Common myeloid progenitor, CD34-positive (primary cell): ENCODE measurements at regions of chr3 and their contacts with region 1.

Region 1: GRCh38 chr3:52339612-52340011 is 23.5 kb downstream of the DNAH1 start:
- DNase-seq: peak; percentile 89 to 93 (median 89)
- H3K4me3 ChIP-seq: no peak overlapping the region
- H3K27ac ChIP-seq: no peak overlapping the region
- H3K4me1 ChIP-seq: no peaks in the 10 kb centered on the region
- H3K27me3 ChIP-seq: no peaks in the 10 kb centered on the region

Region 2: DNA sequence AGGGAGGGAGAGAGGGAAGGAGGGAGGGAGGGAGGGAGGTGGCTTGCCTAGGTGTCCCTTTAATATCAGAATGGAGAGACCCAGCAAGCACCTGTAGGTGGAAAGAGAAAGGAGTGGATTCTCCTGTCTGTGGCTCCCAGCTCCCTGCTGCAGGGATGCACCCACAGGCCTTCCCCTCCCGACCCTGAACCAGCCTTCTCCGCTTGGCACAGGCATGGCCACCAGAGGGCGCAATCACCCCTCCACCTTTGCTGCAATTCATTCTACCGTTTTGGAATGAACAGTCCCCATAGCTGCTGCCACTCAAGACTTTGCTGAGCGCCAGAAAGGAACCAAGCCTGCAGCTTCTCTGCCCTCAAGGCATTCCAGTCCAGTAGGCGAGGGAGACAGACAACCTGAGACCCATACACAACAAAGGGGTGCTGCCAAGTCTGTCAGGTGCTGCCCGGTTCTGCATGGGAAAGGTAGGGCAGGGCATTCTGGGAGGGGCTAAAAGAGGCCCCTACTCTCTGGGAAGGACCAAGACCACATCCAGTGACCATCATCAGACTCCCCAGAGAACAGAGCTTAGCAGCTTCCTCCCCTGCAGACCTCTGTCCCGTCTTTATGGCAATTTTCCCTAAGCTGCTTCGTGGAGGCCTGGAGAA is 119.1 kb before region 1 on chr3:
- CTCF ChIA-PET with region 1: interaction called, 122 read pairs
- POLR2A ChIA-PET with region 1: interaction called, 3 read pairs
- DNase-seq: peak; percentile 79 to 90 (median 84)
- H3K4me3 ChIP-seq: no peak overlapping the region
- H3K27ac ChIP-seq: no peak overlapping the region
- H3K4me1 ChIP-seq: peaks cover 10 to 80% (median 59%) of the 10 kb centered on the region in 4 experiments
- H3K27me3 ChIP-seq: no peaks in the 10 kb centered on the region

Region 3: DNA sequence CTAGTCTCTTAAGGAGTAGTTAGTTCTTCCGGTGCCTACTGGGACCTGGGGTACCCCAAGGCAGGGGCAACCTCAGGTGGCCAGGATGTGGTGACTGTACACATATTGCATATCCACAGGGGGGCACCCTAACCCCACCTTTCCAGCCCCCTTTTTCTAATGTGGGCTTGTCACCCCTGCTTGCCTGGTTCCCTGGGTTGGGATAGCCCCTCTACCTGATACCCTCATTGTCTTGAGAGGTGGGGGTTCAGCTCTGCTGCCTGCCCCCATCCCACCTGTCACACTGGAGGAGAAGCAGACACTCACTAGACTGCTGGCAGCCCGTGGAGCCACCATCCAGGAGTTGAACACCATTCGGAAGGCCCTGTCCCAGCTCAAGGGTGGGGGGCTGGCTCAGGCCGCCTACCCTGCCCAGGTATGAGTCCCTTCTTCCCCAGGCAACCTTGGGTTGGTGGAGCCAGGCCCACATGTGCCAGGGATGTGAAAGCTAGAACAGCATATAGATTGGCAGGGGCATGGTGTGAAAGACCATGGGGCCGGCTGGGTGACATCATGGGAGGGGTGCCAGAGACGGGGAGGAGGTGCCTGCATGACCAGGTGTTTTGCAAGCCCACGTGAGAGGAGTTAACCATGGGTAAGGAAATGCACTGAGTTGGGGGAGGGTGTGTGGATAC is 48.0 kb before region 1 on chr3:
- CTCF ChIA-PET with region 1: interaction called, 471 read pairs
- POLR2A ChIA-PET with region 1: interaction called, 3 read pairs
- DNase-seq: peak; percentile 39 to 65 (median 57)
- H3K4me3 ChIP-seq: no peak overlapping the region
- H3K27ac ChIP-seq: no peak overlapping the region
- H3K4me1 ChIP-seq: peaks cover 3 to 33% (median 19%) of the 10 kb centered on the region in 4 experiments
- H3K27me3 ChIP-seq: no peaks in the 10 kb centered on the region

Region 4: DNA sequence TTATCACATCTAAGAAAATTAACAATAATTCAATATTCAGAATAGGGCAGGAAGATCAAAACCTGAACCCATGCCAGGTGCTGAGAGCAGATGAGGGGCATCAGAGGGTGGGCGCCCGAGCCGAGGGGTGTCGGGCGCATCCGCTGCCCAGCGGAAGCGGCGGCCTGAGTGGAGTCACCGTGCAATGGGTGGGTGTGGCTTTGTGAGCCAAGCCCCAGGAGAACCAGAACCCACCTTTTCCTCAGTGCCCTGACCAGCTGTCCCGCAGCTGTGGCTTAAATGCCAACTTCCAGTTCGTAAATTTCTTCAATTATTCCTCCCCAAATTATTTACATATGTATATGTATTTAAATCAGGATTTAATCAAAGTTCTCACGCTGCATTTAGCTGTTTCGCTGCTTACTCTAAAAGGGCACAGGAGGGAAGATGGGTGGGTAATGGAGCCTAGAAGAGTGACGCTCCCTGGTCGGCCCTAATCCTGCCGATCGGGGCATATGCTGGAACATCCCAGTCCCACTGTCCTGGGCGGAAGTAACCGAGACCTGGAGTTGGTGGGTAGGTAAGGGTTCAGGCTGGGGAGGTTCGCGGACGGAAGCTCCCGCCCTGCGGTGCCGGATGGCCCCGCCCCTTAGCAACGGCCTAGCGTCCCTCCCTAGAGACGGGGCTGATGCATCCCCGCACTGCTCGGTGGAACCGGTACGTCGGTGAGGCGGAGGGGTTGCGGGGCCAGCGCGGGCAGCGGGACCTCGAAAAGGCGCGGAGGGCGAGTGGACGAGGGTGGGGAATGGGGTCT is 22.2 kb before region 1 on chr3:
- CTCF ChIA-PET with region 1: interaction called, 14 read pairs
- POLR2A ChIA-PET with region 1: no interaction called
- DNase-seq: peak; percentile 29 to 65 (median 62)
- H3K4me3 ChIP-seq: peak overlapping the region in 4 of 7 experiments; percentile 39 to 73 (median 58)
- H3K27ac ChIP-seq: no peak overlapping the region
- H3K4me1 ChIP-seq: peaks cover 0 to 11% (median 7%) of the 10 kb centered on the region in 4 experiments
- H3K27me3 ChIP-seq: no peaks in the 10 kb centered on the region

Region 5: DNA sequence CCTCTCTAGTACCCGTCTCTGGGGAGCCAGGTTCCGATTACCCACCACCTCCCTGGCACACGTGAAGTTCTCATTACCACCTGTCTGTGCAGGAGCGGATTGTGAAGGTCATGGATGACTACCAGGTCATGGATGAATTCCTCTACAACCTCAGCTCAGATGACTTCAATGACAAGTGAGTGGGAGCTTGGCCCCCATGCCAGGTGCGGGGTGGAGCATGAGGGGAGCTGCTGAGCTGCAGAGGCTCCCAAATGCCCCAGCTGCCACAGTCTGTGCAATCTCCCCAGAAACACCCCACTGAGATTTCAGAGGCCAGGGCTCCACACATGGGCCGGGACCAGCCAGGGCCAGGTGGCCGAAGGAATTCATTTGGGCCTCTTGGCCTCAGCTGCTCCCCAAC is 10.8 kb after region 1 on chr3:
- CTCF ChIA-PET with region 1: interaction called, 10 read pairs
- POLR2A ChIA-PET with region 1: no interaction called
- DNase-seq: no peak
- H3K4me3 ChIP-seq: no peak overlapping the region
- H3K27ac ChIP-seq: no peak overlapping the region
- H3K4me1 ChIP-seq: no peaks in the 10 kb centered on the region
- H3K27me3 ChIP-seq: no peaks in the 10 kb centered on the region

Region 6: DNA sequence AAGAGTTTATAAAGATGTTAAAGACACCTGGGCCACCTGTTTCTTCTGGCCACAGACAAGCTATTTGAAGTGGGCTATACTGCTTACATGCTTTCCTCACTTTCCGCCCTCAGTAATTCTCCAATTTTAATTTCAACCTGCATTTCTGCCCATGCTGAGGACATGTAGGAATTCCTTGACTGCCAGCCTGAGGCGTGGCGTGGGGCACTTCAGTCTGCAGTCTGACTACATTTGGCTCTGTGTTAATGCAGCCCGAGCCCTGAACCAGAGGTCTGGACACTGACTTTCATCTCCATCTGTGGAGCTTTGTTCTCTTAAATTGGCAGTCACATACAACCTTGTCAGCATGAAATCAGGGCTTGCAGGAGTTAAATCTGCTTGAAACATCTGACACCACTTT is 205.3 kb after region 1 on chr3:
- CTCF ChIA-PET with region 1: no interaction called
- POLR2A ChIA-PET with region 1: no interaction called
- DNase-seq: no peak
- H3K4me3 ChIP-seq: no peak overlapping the region
- H3K27ac ChIP-seq: no peak overlapping the region
- H3K4me1 ChIP-seq: no peaks in the 10 kb centered on the region
- H3K27me3 ChIP-seq: no peaks in the 10 kb centered on the region